Natural killer cell (primary cell): ENCODE measurements at regions of chr16 and their contacts with region 1.

Region 1: GRCh38 chr16:50024684-50025536 is at the start of gene CNEP1R1:
- DNase-seq: peak; percentile 93 to 96
- ATAC-seq: peak; percentile 94 to 99 (median 97)
- H3K4me3 ChIP-seq: peak within 1 kb of the TSS; percentile 54
- H3K4me3 Mint-ChIP-seq: peak within 1 kb of the TSS; percentile 94
- H3K27ac ChIP-seq: peak within 1 kb of the TSS; percentile 67
- H3K27ac Mint-ChIP-seq: peak within 1 kb of the TSS; percentile 80 to 96
- H3K4me1 ChIP-seq: peaks cover 13% of the 10 kb centered on the region
- H3K4me1 Mint-ChIP-seq: peaks cover 14 to 15% of the 10 kb centered on the region in 2 donors
- H3K27me3 ChIP-seq: no peaks in the 10 kb centered on the region
- H3K27me3 Mint-ChIP-seq: peaks cover 8 to 9% of the 10 kb centered on the region in 2 donors
- CTCF ChIP-seq: peak; percentile 100
- total RNA-seq, gene CNEP1R1: 34.3 to 41.6 (median 37.5) TPM

Region 2: GRCh38 chr16:50038756-50039529 is 14.0 kb after region 1 on chr16:
- intact Hi-C with region 1: no loop called
- DNase-seq: peak in 1 of 2 donors; percentile 7
- ATAC-seq: peak in 2 of 3 donors; percentile 24 to 48
- H3K4me3 ChIP-seq: no peak overlapping the region
- H3K4me3 Mint-ChIP-seq: no peak overlapping the region
- H3K27ac ChIP-seq: no peak overlapping the region
- H3K27ac Mint-ChIP-seq: peak overlapping the region; percentile 73 to 76
- H3K4me1 ChIP-seq: no peaks in the 10 kb centered on the region
- H3K4me1 Mint-ChIP-seq: peaks cover 18 to 19% of the 10 kb centered on the region in 2 donors
- H3K27me3 ChIP-seq: no peaks in the 10 kb centered on the region
- H3K27me3 Mint-ChIP-seq: peaks cover 3 to 13% of the 10 kb centered on the region in 2 donors
- CTCF ChIP-seq: no peak

Region 3: DNA sequence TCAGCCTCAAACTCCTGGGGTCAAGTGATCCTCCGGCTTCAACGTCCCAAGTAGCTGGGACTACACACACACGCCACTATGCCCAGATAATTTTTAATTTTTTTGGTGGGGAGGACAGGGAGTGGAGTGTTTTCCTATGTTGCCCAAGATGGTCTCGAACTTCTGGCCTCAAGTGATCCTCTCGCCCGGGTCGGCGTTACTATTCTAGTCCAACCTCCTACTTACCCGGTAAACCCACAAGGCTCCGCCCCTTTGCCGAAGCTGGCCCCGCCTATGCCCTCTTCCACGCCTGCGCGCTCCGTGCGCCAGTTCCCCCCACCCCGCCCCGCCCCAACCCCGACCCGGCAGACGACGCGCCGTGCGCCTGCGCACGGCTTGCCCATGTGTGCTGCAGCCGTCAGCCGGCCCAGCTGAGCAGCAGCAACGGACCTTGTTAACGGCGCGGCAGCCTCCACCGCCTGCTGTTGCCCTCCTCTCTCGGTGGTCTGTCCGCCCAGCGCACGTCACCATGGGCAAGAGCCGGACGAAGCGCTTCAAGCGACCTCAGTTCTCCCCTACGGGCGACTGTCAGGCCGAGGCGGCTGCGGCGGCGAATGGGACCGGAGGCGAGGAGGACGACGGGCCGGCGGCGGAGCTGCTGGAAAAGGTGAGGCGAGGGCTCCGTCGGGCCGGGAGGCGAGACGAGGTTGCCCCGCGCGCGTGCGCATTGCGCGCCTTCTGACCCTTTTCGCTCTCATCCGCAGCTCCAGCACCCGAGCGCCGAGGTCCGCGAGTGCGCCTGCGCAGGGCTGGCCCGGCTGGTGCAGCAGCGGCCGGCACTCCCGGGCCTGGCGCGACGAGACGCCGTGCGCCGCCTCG is 40.9 kb after region 1 on chr16 and contains the start of gene HEATR3:
- intact Hi-C with region 1: loop called (anchors 2 kb)
- DNase-seq: peak; percentile 92 to 96
- ATAC-seq: peak; percentile 85 to 92 (median 87)
- H3K4me3 ChIP-seq: peak within 1 kb of the TSS; percentile 69
- H3K4me3 Mint-ChIP-seq: peak within 1 kb of the TSS; percentile 95
- H3K27ac ChIP-seq: peak within 1 kb of the TSS; percentile 69
- H3K27ac Mint-ChIP-seq: peak within 1 kb of the TSS; percentile 84
- H3K4me1 ChIP-seq: peaks cover 21% of the 10 kb centered on the region
- H3K4me1 Mint-ChIP-seq: peaks cover 24 to 38% of the 10 kb centered on the region in 2 donors
- H3K27me3 ChIP-seq: no peaks in the 10 kb centered on the region
- H3K27me3 Mint-ChIP-seq: no peaks in the 10 kb centered on the region
- CTCF ChIP-seq: no peak
- total RNA-seq, gene HEATR3: 14.6 to 25.0 (median 21.4) TPM

Region 4: GRCh38 chr16:50152807-50153452 is 128.0 kb after region 1 on chr16 and contains the start of gene TENT4B:
- intact Hi-C with region 1: loop called (anchors 2 kb)
- DNase-seq: peak; percentile 86 to 95
- ATAC-seq: peak; percentile 74 to 89 (median 80)
- H3K4me3 ChIP-seq: peak within 1 kb of the TSS; percentile 57
- H3K4me3 Mint-ChIP-seq: peak within 1 kb of the TSS; percentile 90
- H3K27ac ChIP-seq: peak within 1 kb of the TSS; percentile 90
- H3K27ac Mint-ChIP-seq: peak within 1 kb of the TSS; percentile 86 to 89
- H3K4me1 ChIP-seq: peaks cover 31% of the 10 kb centered on the region
- H3K4me1 Mint-ChIP-seq: peaks cover 27 to 31% of the 10 kb centered on the region in 2 donors
- H3K27me3 ChIP-seq: no peaks in the 10 kb centered on the region
- H3K27me3 Mint-ChIP-seq: no peaks in the 10 kb centered on the region
- CTCF ChIP-seq: no peak
- total RNA-seq, gene TENT4B: 37.5 to 48.7 (median 44.4) TPM

Region 5: DNA sequence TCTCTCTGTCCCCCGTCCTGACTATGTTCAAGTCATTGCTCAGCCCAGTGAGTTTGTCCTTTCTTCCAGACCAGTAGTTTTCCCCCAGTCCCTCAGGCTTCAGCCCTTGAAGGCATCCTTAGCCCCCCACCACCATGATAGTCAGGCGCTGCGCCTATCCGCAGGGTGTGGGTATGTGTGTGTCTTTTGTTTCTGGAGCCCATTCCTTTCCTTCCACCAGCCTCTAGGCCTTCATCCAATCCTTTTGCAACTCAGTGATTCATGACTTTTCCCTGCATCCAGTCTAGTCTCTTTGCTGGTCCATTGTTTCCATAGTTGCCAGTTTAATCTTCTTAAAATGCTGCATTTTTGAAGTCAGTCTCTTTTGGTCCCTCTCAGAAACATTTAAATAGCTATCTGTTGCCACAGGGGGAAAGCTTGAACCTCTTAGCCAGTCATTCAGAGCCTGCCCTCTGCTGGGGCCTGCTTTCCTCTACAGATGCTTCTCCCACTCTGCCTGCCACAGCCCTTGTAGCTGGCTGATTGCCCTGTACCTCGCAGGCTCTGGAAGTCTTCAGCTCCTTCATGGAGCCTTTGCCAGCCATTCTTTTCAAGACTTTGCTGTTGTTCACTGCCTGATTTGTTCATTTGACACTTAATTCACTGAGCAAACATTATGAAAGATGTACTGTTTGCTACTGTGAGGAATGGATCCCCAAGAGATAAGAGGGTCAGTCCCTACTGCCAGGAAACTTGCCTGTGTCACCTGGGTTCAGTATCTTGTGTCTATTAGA is 185.5 kb after region 1 on chr16:
- intact Hi-C with region 1: loop called (anchors 2 kb)
- DNase-seq: peak; percentile 43 to 77
- ATAC-seq: peak; percentile 83 to 90 (median 89)
- H3K4me3 ChIP-seq: no peak overlapping the region
- H3K4me3 Mint-ChIP-seq: no peak overlapping the region
- H3K27ac ChIP-seq: no peak overlapping the region
- H3K27ac Mint-ChIP-seq: peak overlapping the region; percentile 11 to 46
- H3K4me1 ChIP-seq: peaks cover 21% of the 10 kb centered on the region
- H3K4me1 Mint-ChIP-seq: peaks cover 32 to 35% of the 10 kb centered on the region in 2 donors
- H3K27me3 ChIP-seq: no peaks in the 10 kb centered on the region
- H3K27me3 Mint-ChIP-seq: no peaks in the 10 kb centered on the region
- CTCF ChIP-seq: peak; percentile 58

Region 6: GRCh38 chr16:50354629-50355456 is 329.9 kb after region 1 on chr16:
- intact Hi-C with region 1: loop called (anchors 10 kb)
- DNase-seq: peak in 1 of 2 donors; percentile 56
- ATAC-seq: peak in 2 of 3 donors; percentile 51 to 59
- H3K4me3 ChIP-seq: no peak overlapping the region
- H3K4me3 Mint-ChIP-seq: no peak overlapping the region
- H3K27ac ChIP-seq: peak overlapping the region; percentile 37
- H3K27ac Mint-ChIP-seq: peak overlapping the region; percentile 68 to 86
- H3K4me1 ChIP-seq: no peaks in the 10 kb centered on the region
- H3K4me1 Mint-ChIP-seq: peaks cover 16 to 17% of the 10 kb centered on the region in 2 donors
- H3K27me3 ChIP-seq: no peaks in the 10 kb centered on the region
- H3K27me3 Mint-ChIP-seq: no peaks in the 10 kb centered on the region
- CTCF ChIP-seq: peak; percentile 88

Region 7: DNA sequence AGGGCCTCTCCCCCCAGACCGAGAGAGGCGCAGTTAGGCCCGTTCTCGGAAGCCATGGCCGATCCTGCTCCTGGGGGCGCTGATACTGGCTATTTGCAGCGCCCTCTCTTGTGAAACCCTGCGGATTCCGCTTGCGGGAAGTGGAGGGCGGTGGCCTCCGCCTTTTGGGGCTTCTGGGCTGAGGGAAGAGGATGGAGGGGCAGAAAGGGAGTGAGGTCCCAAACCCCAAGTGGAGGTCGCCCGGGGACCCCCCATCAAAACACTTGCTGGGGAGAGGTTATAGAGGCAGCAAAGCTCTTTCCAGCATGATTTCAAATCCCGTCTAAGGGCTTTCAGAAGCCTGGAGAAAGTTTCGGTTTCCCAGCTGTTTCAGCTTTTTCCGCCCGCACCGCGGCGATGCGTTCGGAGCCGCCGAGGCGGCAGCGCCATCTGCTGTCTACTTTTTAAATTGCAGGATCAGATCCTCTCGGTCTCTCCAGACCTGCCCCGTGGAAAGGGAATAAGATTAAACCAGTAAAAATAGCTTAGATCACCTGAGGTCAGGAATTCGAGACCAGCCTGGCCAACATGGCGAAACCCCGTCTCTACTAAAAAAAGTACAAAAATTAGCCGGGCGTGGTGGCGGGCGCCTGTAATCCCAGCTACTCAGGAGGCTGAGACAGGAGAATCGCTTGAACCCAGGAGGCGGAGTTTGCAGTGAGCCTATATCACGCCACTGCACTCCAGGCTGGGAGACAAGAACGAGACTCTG is 640.4 kb after region 1 on chr16:
- intact Hi-C with region 1: loop called (anchors 1 kb)
- DNase-seq: peak; percentile 80 to 90
- ATAC-seq: peak; percentile 73 to 78 (median 74)
- H3K4me3 ChIP-seq: peak overlapping the region; percentile 56
- H3K4me3 Mint-ChIP-seq: peak overlapping the region; percentile 83
- H3K27ac ChIP-seq: peak overlapping the region; percentile 67
- H3K27ac Mint-ChIP-seq: peak overlapping the region; percentile 73 to 93
- H3K4me1 ChIP-seq: peaks cover 29% of the 10 kb centered on the region
- H3K4me1 Mint-ChIP-seq: peaks cover 23 to 30% of the 10 kb centered on the region in 2 donors
- H3K27me3 ChIP-seq: no peaks in the 10 kb centered on the region
- H3K27me3 Mint-ChIP-seq: no peaks in the 10 kb centered on the region
- CTCF ChIP-seq: peak; percentile 80

Region 8: GRCh38 chr16:50741808-50742575 is 717.1 kb after region 1 on chr16 and contains the start of gene CYLD:
- intact Hi-C with region 1: loop called (anchors 5 kb)
- DNase-seq: peak; percentile 98 to 100
- ATAC-seq: peak; percentile 83 to 96 (median 85)
- H3K4me3 ChIP-seq: peak within 1 kb of the TSS; percentile 76
- H3K4me3 Mint-ChIP-seq: peak within 1 kb of the TSS; percentile 92
- H3K27ac ChIP-seq: peak within 1 kb of the TSS; percentile 99
- H3K27ac Mint-ChIP-seq: peak within 1 kb of the TSS; percentile 97 to 99
- H3K4me1 ChIP-seq: peaks cover 26% of the 10 kb centered on the region
- H3K4me1 Mint-ChIP-seq: peaks cover 50 to 52% of the 10 kb centered on the region in 2 donors
- H3K27me3 ChIP-seq: no peaks in the 10 kb centered on the region
- H3K27me3 Mint-ChIP-seq: no peaks in the 10 kb centered on the region
- CTCF ChIP-seq: no peak
- total RNA-seq, gene CYLD: 227 to 246 (median 236) TPM